H1 (cell line): ENCODE measurements at regions of chr4 and their contacts with region 1.

Region 1: GRCh38 chr4:7802093-7802726 is 137.5 kb downstream of the AFAP1 start:
- DNase-seq: peak; percentile 39 to 95
- H3K4me3 ChIP-seq: no peak overlapping the region
- H3K27ac ChIP-seq: no peak overlapping the region
- H3K4me1 ChIP-seq: peaks cover 11 to 20% (median 17%) of the 10 kb centered on the region in 4 experiments
- H3K27me3 ChIP-seq: no peaks in the 10 kb centered on the region
- CTCF ChIP-seq: peak; percentile 72 to 89 (median 85)
- EP300 ChIP-seq: no peak
- POLR2A ChIP-seq: no peak
- RAD21 ChIP-seq: peak; percentile 80 to 85

Region 2: GRCh38 chr4:7392438-7393421 is 409.5 kb before region 1 on chr4:
- CTCF ChIA-PET with region 1: no interaction called
- POLR2A ChIA-PET with region 1: no interaction called
- DNase-seq: peak in 1 of 2 experiments; percentile 41
- H3K4me3 ChIP-seq: no peak overlapping the region
- H3K27ac ChIP-seq: no peak overlapping the region
- H3K4me1 ChIP-seq: no peaks in the 10 kb centered on the region
- H3K27me3 ChIP-seq: 0 out of 7 replicates have a peak, but pooled peaks cover 0 to 1% (median 0%) of the 10 kb centered on the region in 4 experiments
- CTCF ChIP-seq: no peak
- EP300 ChIP-seq: no peak
- POLR2A ChIP-seq: no peak
- RAD21 ChIP-seq: no peak

Region 3: DNA sequence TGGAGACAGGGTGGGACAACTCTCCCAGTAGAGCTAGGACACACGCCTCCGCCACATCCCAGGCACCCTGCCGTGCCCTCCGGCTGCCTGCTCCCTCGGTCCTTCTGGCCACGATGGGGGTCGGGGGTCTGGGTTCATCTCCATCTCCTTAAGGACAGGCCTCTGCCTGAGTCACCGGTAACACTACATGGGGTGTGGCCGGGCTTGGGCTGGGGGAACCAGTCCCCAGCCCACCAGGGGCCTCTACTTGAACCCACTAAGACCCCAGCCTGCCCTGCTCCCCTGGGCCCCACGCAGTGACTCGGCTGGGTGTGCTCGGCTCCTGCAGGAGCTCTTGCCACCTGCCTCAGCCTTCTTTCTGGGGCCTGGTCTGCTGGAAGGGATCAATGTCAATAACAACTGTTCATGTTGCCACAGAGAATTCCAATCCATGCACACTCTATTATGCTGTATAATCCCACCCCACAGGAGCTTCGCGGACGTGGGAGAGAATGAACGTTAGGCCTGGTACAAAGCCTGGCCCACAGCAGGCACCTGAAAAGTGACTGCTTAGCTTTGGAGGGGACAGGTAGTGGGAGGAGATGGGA is 189.8 kb before region 1 on chr4:
- CTCF ChIA-PET with region 1: no interaction called
- POLR2A ChIA-PET with region 1: no interaction called
- DNase-seq: no peak
- H3K4me3 ChIP-seq: no peak overlapping the region
- H3K27ac ChIP-seq: no peak overlapping the region
- H3K4me1 ChIP-seq: no peaks in the 10 kb centered on the region
- H3K27me3 ChIP-seq: no peaks in the 10 kb centered on the region; a peak in 1 of 7 replicates
- CTCF ChIP-seq: no peak
- EP300 ChIP-seq: no peak
- POLR2A ChIP-seq: no peak
- RAD21 ChIP-seq: no peak

Region 4: DNA sequence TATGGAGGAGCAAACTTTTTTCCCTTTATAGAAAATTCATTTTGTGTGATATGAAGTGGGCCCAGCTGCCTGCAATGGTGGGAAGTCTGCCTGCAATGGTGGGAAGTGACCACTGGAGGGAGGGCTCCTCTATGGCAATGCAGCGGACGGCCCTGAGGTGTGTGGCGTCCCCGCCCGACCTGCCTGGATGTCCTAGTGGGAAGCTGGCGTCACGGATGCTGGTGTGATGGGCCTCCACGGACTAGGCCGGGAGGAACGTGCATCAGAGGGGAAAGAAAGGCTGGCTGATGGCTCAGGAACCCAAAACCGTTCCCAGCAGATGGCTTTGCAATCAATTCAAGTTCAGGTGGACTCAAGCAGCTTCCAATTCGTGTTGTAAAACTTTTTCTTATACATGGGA is 40.5 kb before region 1 on chr4:
- CTCF ChIA-PET with region 1: interaction called, 20 read pairs
- POLR2A ChIA-PET with region 1: no interaction called
- DNase-seq: peak; percentile 17 to 83
- H3K4me3 ChIP-seq: no peak overlapping the region
- H3K27ac ChIP-seq: no peak overlapping the region
- H3K4me1 ChIP-seq: no peaks in the 10 kb centered on the region
- H3K27me3 ChIP-seq: no peaks in the 10 kb centered on the region
- CTCF ChIP-seq: peak in 2 of 3 experiments; percentile 76 to 83; a peak in 3 of 4 replicates
- EP300 ChIP-seq: no peak
- POLR2A ChIP-seq: no peak
- RAD21 ChIP-seq: peak; percentile 71 to 74

Region 5: GRCh38 chr4:7781366-7781765 is 20.8 kb before region 1 on chr4:
- CTCF ChIA-PET with region 1: interaction called, 15 read pairs
- POLR2A ChIA-PET with region 1: no interaction called
- DNase-seq: no peak
- H3K4me3 ChIP-seq: no peak overlapping the region
- H3K27ac ChIP-seq: no peak overlapping the region
- H3K4me1 ChIP-seq: no peaks in the 10 kb centered on the region
- H3K27me3 ChIP-seq: no peaks in the 10 kb centered on the region
- CTCF ChIP-seq: no peak
- EP300 ChIP-seq: no peak
- POLR2A ChIP-seq: no peak
- RAD21 ChIP-seq: no peak

Region 6: DNA sequence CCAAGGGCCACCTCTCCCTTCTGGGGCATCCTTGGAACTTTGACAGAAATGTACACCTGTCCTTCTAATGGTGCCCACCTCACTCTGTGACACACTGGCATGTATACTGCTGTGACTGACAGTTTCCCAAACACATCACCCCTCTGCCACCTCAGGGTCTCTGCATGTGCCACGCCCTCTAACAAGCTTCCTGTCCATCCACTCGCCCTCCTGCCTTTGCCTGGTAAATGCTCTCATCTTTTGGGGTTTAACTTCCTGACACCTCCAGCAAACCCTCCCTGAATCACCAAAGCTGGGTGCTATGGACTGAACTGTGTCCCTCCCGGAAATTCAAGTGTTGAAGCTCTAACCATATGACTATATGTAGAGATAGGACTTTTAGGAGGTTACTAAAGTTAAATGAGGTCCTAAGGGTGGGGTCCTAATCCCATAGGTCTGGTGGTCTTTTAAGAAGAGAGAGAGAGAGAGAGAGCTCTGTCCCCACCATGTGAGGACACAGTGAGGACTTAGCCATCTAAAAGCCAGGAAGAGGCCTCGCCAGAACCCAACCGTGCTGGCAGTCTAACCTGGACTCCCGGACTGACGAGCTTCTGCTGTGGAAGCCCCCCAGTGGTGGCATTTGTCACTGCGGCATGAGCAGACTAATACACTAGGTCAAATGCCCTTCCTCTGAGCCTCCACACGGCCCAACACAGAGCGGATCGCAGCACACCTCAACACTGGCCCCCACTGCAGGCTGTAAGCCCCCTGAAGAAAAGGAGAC is 41.8 kb after region 1 on chr4:
- CTCF ChIA-PET with region 1: interaction called, 105 read pairs
- POLR2A ChIA-PET with region 1: interaction called, 3 read pairs
- DNase-seq: peak; percentile 63 to 90
- H3K4me3 ChIP-seq: no peak overlapping the region
- H3K27ac ChIP-seq: no peak overlapping the region
- H3K4me1 ChIP-seq: peaks cover 0 to 3% (median 3%) of the 10 kb centered on the region in 4 experiments; a peak in 4 of 7 replicates
- H3K27me3 ChIP-seq: no peaks in the 10 kb centered on the region
- CTCF ChIP-seq: peak; percentile 80 to 85 (median 84)
- EP300 ChIP-seq: no peak
- POLR2A ChIP-seq: no peak
- RAD21 ChIP-seq: peak; percentile 53 to 71

Region 7: GRCh38 chr4:7863911-7864681 is 61.9 kb after region 1 on chr4:
- CTCF ChIA-PET with region 1: interaction called, 10 read pairs
- POLR2A ChIA-PET with region 1: no interaction called
- DNase-seq: no peak
- H3K4me3 ChIP-seq: no peak overlapping the region
- H3K27ac ChIP-seq: no peak overlapping the region
- H3K4me1 ChIP-seq: peaks cover 5 to 15% (median 10%) of the 10 kb centered on the region in 4 experiments
- H3K27me3 ChIP-seq: no peaks in the 10 kb centered on the region
- CTCF ChIP-seq: no peak
- EP300 ChIP-seq: no peak
- POLR2A ChIP-seq: no peak
- RAD21 ChIP-seq: no peak

Region 8: GRCh38 chr4:7929118-7929951 is 127.1 kb after region 1 on chr4:
- CTCF ChIA-PET with region 1: interaction called, 49 read pairs
- POLR2A ChIA-PET with region 1: interaction called, 3 read pairs
- DNase-seq: peak in 1 of 2 experiments; percentile 25
- H3K4me3 ChIP-seq: no peak overlapping the region
- H3K27ac ChIP-seq: no peak overlapping the region
- H3K4me1 ChIP-seq: peaks cover 6 to 12% (median 10%) of the 10 kb centered on the region in 4 experiments; a peak in 6 of 7 replicates
- H3K27me3 ChIP-seq: no peaks in the 10 kb centered on the region
- CTCF ChIP-seq: peak in 2 of 3 experiments; percentile 30 to 39; a peak in 2 of 4 replicates
- EP300 ChIP-seq: peak in 1 of 2 experiments; percentile 36; a peak in 1 of 3 replicates
- POLR2A ChIP-seq: no peak
- RAD21 ChIP-seq: peak; percentile 53 to 65

Region 9: GRCh38 chr4:7978489-7978888 is 176.3 kb after region 1 on chr4:
- CTCF ChIA-PET with region 1: interaction called, 14 read pairs
- POLR2A ChIA-PET with region 1: interaction called, 4 read pairs
- DNase-seq: no peak
- H3K4me3 ChIP-seq: no peak overlapping the region
- H3K27ac ChIP-seq: peak overlapping the region; percentile 26; the same call in 1 of the 2 replicates
- H3K4me1 ChIP-seq: peaks cover 3 to 18% (median 14%) of the 10 kb centered on the region in 4 experiments
- H3K27me3 ChIP-seq: no peaks in the 10 kb centered on the region
- CTCF ChIP-seq: no peak
- EP300 ChIP-seq: no peak
- POLR2A ChIP-seq: no peak
- RAD21 ChIP-seq: no peak